ENCODE measurements at regions of chr6 and their contacts with region 1.

Region 1: GRCh38 chr6:32843979-32844838 is at the start of gene PSMB8:
- DNase-seq: peak; percentile 98
- H3K4me3 ChIP-seq: peak within 1 kb of the TSS; percentile 77
- H3K27ac ChIP-seq: peak within 1 kb of the TSS; percentile 88
- H3K4me1 ChIP-seq: peaks cover 55% of the 10 kb centered on the region
- CTCF ChIP-seq: 0 out of 2 replicates have a peak, but pooled peaks have one; percentile 9
- total RNA-seq, gene PSMB8: 142 and 164 TPM in 2 replicates

Region 2: GRCh38 chr6:32642720-32643106 is 201.5 kb before region 1 on chr6:
- CTCF ChIA-PET with region 1: no interaction called
- POLR2A ChIA-PET with region 1: no interaction called
- intact Hi-C with region 1: no loop called
- DNase-seq: no peak
- H3K4me3 ChIP-seq: no peak overlapping the region
- H3K27ac ChIP-seq: no peak overlapping the region
- H3K4me1 ChIP-seq: no peaks in the 10 kb centered on the region
- CTCF ChIP-seq: no peak

Region 3: DNA sequence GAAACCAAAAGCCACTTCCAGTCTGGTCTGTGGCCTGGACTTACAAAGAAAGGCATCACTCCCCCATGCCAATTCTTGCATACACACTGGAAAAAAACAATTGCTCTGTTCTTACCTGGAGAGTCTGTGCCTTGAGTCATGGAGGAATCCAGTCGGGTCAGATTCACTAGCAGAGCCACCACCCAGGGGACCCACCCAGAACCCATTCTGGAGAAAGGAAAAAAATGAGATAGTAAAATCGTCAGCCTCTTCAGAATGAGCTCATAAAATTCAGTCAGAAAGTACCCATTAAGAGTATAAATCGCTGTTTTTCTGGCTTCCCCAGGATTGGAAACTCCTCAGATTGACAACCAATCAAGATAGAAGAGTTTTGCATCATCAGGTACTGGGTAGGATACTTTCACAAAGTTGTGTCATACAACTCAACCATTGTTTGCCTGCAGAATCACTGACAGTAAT is 27.4 kb before region 1 on chr6 and contains the start of gene HLA-DOB:
- CTCF ChIA-PET with region 1: no interaction called
- POLR2A ChIA-PET with region 1: interaction called, 11 read pairs
- intact Hi-C with region 1: loop called (anchors 2 kb)
- DNase-seq: peak; percentile 86
- H3K4me3 ChIP-seq: peak within 1 kb of the TSS; percentile 69
- H3K27ac ChIP-seq: peak within 1 kb of the TSS; percentile 97
- H3K4me1 ChIP-seq: peaks cover 92% of the 10 kb centered on the region
- CTCF ChIP-seq: no peak
- total RNA-seq, gene HLA-DOB: 46.5 and 48.1 TPM in 2 replicates

Region 4: DNA sequence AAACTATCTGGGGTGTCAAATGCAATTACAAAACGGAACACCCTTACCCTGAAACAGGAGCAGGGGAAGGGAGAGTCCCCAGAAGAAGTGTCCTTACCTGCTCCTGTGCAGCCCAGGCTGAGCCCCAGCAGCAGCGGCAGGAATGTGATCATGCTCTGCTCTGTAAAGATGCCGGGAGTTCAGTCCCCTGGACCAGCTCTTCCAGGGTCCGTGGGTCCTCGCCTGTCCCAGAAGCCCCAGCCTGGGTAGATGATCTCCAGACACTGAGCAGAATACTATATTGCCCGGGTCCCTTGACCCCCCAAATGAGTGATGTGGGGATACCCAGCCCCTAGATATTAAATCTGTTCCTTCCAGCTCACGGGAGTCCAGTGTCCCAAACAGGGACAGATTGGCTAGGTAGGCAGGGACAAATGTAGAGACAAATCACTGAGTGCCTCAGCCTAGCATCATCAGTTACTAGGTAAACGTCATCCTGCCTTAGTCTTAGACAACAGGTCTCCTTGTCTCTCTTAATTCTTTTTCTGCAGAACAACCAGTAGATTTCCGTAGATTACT is 96.5 kb after region 1 on chr6 and contains the start of gene HLA-DMB:
- CTCF ChIA-PET with region 1: no interaction called
- POLR2A ChIA-PET with region 1: interaction called, 5 read pairs
- intact Hi-C with region 1: loop called (anchors 2 kb)
- DNase-seq: peak; percentile 91
- H3K4me3 ChIP-seq: peak within 1 kb of the TSS; percentile 91
- H3K27ac ChIP-seq: peak within 1 kb of the TSS; percentile 99
- H3K4me1 ChIP-seq: peaks cover 68% of the 10 kb centered on the region
- CTCF ChIP-seq: no peak
- total RNA-seq, gene HLA-DMB: 85.1 and 98.0 TPM in 2 replicates

Measured in OCI-LY7 (cell line).